ENCODE measurements at regions of chr10 and their contacts with region 1.

Region 1: GRCh38 chr10:86899670-86900276 is 57.6 kb downstream of the MMRN2 start:
- ATAC-seq: peak; percentile 65 to 82 (median 76)
- H3K4me3 ChIP-seq: no peak overlapping the region
- H3K27ac ChIP-seq: no peak overlapping the region
- H3K4me1 ChIP-seq: peaks cover 6% of the 10 kb centered on the region in 2 donors

Region 2: DNA sequence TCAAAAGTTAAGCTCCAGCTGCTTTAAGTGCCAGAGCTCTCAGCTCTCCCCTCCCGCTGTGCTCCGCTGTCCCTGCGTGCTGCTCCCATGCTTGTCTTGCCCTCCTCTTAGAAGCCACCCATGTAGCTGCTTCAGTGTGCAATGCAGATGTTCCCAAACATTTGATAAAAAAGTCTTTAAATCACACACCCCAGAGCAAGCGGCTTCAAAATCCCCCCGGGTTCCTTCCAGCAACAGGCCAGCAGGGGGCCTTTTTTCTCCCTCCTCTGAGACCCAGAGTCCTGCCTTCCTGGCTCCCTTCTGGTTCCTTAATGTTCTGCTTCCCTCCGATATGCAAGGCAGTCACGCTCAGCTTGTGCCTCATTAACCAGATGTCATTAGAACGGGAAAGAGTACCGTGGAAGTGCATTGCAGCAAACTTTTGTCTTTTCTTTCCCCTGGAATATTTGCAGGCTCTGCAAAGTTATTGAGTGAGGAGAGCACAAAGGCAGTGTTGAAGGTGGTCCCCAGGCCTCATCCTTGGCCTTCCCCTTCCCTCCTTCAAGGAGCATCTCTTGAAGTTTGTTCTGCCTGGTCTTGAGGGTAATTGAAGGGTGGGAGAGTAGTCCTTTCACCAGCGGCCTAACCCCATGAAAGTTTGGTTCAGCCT is 205.9 kb before region 1 on chr10:
- in situ Hi-C with region 1: loop called in 2 of 9 experiments (anchors 10 kb)
- ATAC-seq: peak; percentile 44 to 93 (median 66)
- H3K4me3 ChIP-seq: no peak overlapping the region
- H3K27ac ChIP-seq: no peak overlapping the region
- H3K4me1 ChIP-seq: peaks cover 0 to 8% of the 10 kb centered on the region in 2 donors

Region 3: GRCh38 chr10:86710987-86711512 is 188.7 kb before region 1 on chr10:
- in situ Hi-C with region 1: loop called in 3 of 9 experiments (anchors 10 to 25 kb)
- ATAC-seq: peak; percentile 87 to 92 (median 88)
- H3K4me3 ChIP-seq: peak overlapping the region; percentile 42 to 44 (median 43)
- H3K27ac ChIP-seq: peak overlapping the region; percentile 24 to 79
- H3K4me1 ChIP-seq: peaks cover 3 to 8% of the 10 kb centered on the region in 2 donors

Region 4: DNA sequence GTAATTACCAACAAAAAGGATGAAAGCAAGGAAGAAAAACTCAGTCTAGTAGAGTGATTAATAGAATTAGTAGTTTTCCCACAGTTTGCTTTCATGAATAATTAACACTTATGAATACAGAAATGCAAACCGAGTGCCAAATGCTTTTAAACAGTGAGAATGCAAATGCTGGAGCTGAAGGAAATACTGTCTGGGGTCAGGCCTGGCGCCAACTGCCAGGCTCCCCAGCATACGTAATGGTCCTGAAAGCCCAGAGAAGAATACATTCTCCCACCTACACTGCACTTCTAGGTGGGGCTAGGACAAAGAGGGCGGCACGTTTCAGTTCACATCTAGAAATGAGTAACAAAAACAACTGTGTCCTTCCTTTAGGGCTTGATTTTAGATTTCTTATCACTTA is 164.9 kb after region 1 on chr10:
- in situ Hi-C with region 1: no loop called
- ATAC-seq: peak; percentile 37 to 68 (median 56)
- H3K4me3 ChIP-seq: no peak overlapping the region
- H3K27ac ChIP-seq: no peak overlapping the region
- H3K4me1 ChIP-seq: no peaks in the 10 kb centered on the region